Activated naive CD4-positive, alpha-beta T cell treated with anti-CD3 and anti-CD28 coated beads for 36 hours (primary cell): ENCODE measurements at regions of chr9 and their contacts with region 1.

Region 1: DNA sequence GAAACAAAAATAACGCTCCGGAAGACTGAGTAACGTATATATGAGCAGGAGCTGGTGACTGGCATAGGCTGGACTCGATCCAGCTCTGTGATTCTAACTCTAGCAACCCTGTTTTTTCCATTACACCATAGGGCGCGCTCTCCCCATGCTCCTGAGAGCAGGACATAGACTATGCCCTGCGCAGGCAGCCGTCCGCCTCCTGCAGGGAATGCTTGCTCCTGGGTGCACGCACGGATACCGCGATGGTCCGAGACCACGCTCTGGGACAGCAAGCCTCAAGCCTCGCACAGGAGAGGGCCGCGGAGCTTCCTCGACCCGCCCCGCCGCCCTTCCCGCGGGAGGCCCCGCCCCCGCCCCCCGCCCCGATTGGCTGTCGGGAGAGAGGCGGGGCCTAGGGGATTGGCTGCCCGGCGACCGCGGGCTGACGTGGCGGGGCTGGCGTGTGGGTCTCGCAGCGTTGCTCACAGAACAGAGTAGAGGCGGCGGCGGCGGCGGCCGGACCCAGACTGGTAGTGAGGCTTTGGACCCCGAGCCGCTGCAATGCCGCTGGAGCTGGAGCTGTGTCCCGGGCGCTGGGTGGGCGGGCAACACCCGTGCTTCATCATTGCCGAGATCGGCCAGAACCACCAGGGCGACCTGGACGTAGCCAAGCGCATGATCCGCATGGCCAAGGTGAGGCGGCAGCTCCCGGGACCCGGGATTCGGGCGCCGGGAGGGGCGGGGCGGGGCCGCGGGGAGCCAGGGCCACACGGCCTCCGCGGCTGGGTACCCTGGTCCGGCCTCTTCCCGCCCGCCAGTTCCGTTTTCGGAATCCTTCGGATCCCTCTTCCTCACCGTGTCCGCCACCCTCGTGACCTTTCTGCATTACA is at the start of gene NANS:
- DNase-seq: peak; percentile 93
- H3K4me3 Mint-ChIP-seq: peak within 1 kb of the TSS; percentile 94
- H3K27ac Mint-ChIP-seq: peak within 1 kb of the TSS; percentile 92
- H3K4me1 Mint-ChIP-seq: peaks cover 27% of the 10 kb centered on the region
- H3K27me3 Mint-ChIP-seq: no peaks in the 10 kb centered on the region
- total RNA-seq, gene NANS: 46.1 to 51.0 TPM

Region 2: GRCh38 chr9:97803167-97804058 is 253.1 kb before region 1 on chr9:
- CTCF ChIA-PET with region 1: no interaction called
- intact Hi-C with region 1: loop called (anchors 10 kb)
- DNase-seq: peak; percentile 72
- H3K4me3 Mint-ChIP-seq: peak overlapping the region; percentile 77
- H3K27ac Mint-ChIP-seq: no peak overlapping the region
- H3K4me1 Mint-ChIP-seq: peaks cover 8% of the 10 kb centered on the region
- H3K27me3 Mint-ChIP-seq: peaks cover 15% of the 10 kb centered on the region

Region 3: DNA sequence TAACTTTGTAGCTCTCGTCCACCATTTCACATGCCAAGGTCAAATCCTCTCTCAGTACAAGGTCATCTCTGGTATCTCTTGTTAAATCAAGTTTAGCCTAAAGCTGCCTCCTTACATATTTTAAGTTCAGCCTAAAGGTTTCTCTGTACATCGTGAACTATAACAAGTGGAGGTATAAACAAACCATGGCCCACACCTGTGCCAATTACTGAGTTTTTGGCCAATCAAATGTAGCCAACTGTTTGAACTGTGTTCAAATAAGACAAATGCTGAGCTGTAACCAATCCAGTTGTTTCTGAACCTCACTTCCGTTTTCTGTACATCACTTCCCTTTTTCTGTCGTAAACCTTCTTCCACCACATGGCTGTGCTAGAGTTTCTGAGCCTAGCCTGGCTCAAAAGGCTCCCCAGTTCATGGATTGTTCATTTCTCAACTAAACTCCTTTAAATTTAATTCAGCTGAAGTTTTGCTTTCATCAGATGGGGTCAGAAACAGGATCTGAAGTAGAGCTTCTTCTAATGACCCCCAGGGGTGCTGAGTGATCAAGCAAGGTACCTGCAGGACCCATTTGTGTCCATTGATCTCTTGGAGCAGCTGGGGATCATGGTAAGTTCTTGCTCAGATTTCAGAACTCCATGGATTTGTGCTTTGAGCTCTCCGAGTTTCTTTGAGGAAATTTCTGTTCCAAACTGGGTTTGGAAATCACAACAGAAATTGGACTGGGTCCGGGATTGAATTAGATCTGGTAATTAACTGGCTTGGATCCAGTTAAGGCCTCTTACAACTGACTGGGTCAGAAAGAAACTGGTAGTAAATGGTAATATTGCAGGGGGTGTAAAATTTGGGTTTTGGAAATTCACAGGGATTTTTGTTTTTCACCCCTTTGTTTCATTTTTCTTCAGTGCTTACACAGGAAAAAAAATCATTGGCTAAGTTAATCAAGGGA is 11.0 kb before region 1 on chr9:
- CTCF ChIA-PET with region 1: interaction called, 13 read pairs
- intact Hi-C with region 1: loop called (anchors 1 kb)
- DNase-seq: peak; percentile 58
- H3K4me3 Mint-ChIP-seq: peak overlapping the region; percentile 84
- H3K27ac Mint-ChIP-seq: peak overlapping the region; percentile 90
- H3K4me1 Mint-ChIP-seq: peaks cover 42% of the 10 kb centered on the region
- H3K27me3 Mint-ChIP-seq: no peaks in the 10 kb centered on the region

Region 4: DNA sequence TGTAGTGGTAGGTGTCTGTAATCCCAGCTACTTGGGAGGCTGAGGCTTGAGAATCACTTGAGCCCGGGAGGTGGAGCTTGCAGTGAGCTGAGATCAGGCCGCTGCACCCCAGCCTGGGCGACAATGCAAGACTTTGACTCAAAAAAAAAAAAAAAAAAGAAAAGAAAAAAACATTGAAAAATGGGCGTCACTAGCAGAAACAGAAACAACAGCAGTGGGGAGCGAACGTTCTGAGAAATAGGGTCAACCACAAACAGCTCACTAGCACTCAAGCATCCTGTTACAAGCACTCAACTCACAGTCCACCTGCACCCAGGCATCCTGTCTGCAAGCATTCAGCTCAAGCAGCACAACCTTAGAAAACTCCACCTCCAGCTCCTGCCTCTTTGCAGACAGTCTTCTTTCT is 45.4 kb after region 1 on chr9:
- CTCF ChIA-PET with region 1: no interaction called
- intact Hi-C with region 1: loop called (anchors 1 kb)
- DNase-seq: peak; percentile 90
- H3K4me3 Mint-ChIP-seq: peak overlapping the region; percentile 65
- H3K27ac Mint-ChIP-seq: peak overlapping the region; percentile 96
- H3K4me1 Mint-ChIP-seq: peaks cover 83% of the 10 kb centered on the region
- H3K27me3 Mint-ChIP-seq: no peaks in the 10 kb centered on the region

Region 5: DNA sequence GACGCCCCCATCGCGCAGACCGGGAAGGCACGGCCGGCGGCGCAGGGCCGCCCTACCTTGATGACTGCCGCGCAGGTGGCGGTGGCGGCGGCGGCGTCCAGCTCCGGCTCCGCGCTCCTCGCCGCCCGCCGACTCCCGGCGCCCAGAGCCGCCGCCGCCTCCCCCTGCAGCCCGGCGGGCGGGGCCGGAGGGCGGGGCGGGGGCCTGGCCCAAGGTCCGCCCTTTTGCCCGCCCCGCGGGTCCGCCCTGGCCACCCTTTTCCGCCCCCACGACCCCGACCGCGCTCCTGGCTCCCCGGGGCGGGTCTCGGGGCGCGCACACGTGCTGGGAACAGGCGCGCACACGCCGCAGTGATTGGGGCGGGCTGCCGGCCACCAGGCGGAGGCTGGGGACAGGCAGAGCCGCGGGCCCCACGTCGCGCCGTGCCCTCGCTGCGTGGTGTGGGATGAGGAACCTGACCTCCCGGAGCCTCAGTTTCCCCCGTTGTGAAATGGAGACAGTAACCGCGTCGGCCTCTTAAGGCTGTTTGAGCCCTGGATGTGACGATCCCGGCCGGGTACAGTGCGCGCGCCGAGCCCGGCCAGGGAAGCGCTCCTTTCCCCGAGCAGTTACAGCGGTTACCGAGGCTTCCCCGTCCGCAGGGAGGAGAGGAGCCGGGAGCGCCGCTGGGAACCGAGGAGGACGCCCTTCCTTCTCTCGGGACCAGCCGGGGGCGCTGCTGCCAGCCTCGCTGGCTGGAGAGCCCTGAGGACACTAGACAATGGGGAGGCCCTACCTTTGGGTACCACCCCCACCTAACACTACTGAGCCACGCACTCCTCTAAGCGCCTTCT is 136.2 kb after region 1 on chr9 and contains the start of gene CORO2A:
- CTCF ChIA-PET with region 1: no interaction called
- intact Hi-C with region 1: loop called (anchors 1 kb)
- DNase-seq: peak; percentile 64
- H3K4me3 Mint-ChIP-seq: peak within 1 kb of the TSS; percentile 82
- H3K27ac Mint-ChIP-seq: peak within 1 kb of the TSS; percentile 56
- H3K4me1 Mint-ChIP-seq: peaks cover 27% of the 10 kb centered on the region
- H3K27me3 Mint-ChIP-seq: no peaks in the 10 kb centered on the region
- total RNA-seq, gene CORO2A: 8.1 to 8.2 TPM